ENCODE measurements at regions of chr7 and their contacts with region 1.

Region 1: DNA sequence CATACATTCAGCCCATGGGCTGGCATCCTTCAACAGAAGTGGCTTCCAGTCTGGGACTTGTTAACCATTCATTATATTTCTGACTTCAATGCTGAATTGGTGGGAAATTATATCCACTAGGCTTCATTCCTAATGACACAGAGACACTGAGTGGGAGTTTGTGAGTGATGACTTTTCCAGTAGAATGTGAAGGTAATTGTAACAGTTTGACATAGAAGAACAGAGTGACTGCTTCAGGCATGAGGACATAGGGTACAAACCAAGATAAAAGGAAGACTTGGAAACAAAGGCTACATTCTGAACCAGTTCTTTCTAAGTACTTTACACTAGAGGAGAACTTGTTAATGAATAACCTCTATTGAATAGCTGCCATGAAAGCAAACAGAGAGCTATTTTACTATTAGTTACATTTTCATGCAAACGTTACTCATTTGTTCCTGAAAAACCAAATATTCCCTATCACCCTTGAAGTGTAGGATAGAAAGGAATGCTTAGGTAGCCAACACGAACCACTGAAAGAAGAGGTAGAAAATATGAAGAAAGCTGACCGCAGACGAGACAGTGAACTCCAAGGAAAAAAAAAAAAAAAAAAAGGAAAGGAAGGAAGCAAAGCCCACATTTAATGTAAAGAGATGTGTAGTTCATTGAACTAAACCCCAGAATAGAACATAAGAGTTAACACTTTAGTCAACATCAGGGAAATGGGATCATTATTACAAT is 237.0 kb upstream of the SEMA3C start:
- DNase-seq: no peak
- ATAC-seq: no peak
- H3K4me3 ChIP-seq: no peak overlapping the region
- H3K4me3 Mint-ChIP-seq: no peak overlapping the region
- H3K27ac ChIP-seq: no peak overlapping the region
- H3K27ac Mint-ChIP-seq: no peak overlapping the region
- H3K4me1 ChIP-seq: no peaks in the 10 kb centered on the region
- H3K4me1 Mint-ChIP-seq: no peaks in the 10 kb centered on the region
- H3K27me3 ChIP-seq: no peaks in the 10 kb centered on the region
- H3K27me3 Mint-ChIP-seq: no peaks in the 10 kb centered on the region

Region 2: DNA sequence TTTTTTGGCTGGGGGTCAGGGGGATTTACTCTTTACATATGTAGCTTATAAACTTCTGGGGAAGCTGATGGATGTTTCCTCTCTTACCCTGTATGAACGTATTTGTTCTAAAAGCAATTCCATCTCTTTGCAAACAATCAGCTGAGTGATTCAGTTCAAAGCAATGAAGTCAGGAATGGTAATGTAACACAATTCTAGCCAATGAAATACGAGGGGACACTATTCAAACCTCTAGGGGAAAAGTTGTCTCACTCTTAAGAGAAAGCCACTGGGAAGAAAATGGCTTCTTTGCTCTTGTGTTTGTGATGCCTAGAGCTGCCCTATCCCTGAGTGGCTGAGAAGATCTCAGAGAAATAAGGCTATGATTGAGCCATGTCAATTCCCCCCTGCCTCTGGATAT is 102.2 kb before region 1 on chr7:
- CTCF ChIA-PET with region 1: no interaction called
- POLR2A ChIA-PET with region 1: no interaction called
- DNase-seq: no peak
- ATAC-seq: no peak
- H3K4me3 ChIP-seq: no peak overlapping the region
- H3K4me3 Mint-ChIP-seq: no peak overlapping the region
- H3K27ac ChIP-seq: no peak overlapping the region
- H3K27ac Mint-ChIP-seq: no peak overlapping the region
- H3K4me1 ChIP-seq: no peaks in the 10 kb centered on the region
- H3K4me1 Mint-ChIP-seq: no peaks in the 10 kb centered on the region
- H3K27me3 ChIP-seq: no peaks in the 10 kb centered on the region
- H3K27me3 Mint-ChIP-seq: no peaks in the 10 kb centered on the region

Region 3: GRCh38 chr7:81186691-81187090 is 30.9 kb after region 1 on chr7:
- CTCF ChIA-PET with region 1: no interaction called
- POLR2A ChIA-PET with region 1: no interaction called
- DNase-seq: no peak
- ATAC-seq: no peak
- H3K4me3 ChIP-seq: no peak overlapping the region
- H3K4me3 Mint-ChIP-seq: no peak overlapping the region
- H3K27ac ChIP-seq: no peak overlapping the region
- H3K27ac Mint-ChIP-seq: no peak overlapping the region
- H3K4me1 ChIP-seq: no peaks in the 10 kb centered on the region
- H3K4me1 Mint-ChIP-seq: no peaks in the 10 kb centered on the region
- H3K27me3 ChIP-seq: no peaks in the 10 kb centered on the region
- H3K27me3 Mint-ChIP-seq: no peaks in the 10 kb centered on the region

Region 4: GRCh38 chr7:81802251-81802650 is 646.4 kb after region 1 on chr7:
- CTCF ChIA-PET with region 1: interaction called in 1 of 2 experiments, 13 read pairs
- POLR2A ChIA-PET with region 1: no interaction called
- DNase-seq: no peak
- ATAC-seq: no peak
- H3K4me3 ChIP-seq: no peak overlapping the region
- H3K4me3 Mint-ChIP-seq: no peak overlapping the region
- H3K27ac ChIP-seq: no peak overlapping the region
- H3K27ac Mint-ChIP-seq: no peak overlapping the region
- H3K4me1 ChIP-seq: no peaks in the 10 kb centered on the region
- H3K4me1 Mint-ChIP-seq: no peaks in the 10 kb centered on the region
- H3K27me3 ChIP-seq: no peaks in the 10 kb centered on the region
- H3K27me3 Mint-ChIP-seq: no peaks in the 10 kb centered on the region

Measured in T-cell (primary cell).